MCF 10A (cell line): ENCODE measurements at regions of chr4 and their contacts with region 1.

Region 1: GRCh38 chr4:84366136-84366535 is 133.0 kb downstream of the NKX6-1 start:
- DNase-seq: peak; percentile 44
- H3K4me3 Mint-ChIP-seq: no peak overlapping the region
- H3K27ac Mint-ChIP-seq: no peak overlapping the region
- H3K4me1 Mint-ChIP-seq: no peaks in the 10 kb centered on the region
- H3K27me3 Mint-ChIP-seq: peaks cover 29% of the 10 kb centered on the region
- CTCF ChIP-seq: no peak

Region 2: DNA sequence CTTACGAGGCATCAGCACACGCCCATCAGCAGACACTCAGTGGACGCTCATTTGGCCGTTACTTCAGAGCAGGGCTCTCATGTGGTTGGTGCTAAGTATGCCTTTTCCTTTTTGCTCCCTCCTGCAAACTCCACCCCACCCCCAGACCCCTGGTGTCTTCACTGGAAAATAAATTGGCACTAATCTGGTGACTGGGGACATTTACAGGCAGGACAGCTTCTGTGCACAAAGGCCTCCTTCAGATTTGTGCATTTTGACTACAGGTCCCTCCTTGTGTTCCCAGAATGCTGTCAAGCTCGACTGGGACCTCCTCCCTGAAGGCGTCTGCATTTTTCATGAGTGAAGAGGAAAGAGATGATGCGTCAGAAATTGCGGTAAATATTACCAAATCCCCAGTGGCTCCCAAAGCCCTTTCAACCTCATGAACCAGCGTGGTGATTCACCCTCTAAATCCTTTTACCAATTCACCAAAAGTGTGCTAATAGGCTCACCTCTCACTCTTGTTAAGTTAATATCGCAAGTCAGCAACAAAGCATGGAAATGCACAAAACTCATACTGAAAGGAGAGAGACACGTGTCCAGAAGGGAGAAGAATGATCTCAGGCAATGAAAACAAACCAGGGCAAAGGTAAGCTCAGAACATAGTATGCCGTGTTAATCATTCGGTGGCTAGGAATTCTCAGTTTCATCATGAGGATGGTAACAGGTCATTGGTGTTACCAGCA is 13.9 kb after region 1 on chr4:
- CTCF ChIA-PET with region 1: no interaction called
- POLR2A ChIA-PET with region 1: interaction called, 4 read pairs
- intact Hi-C with region 1: loop called (anchors 1 kb)
- DNase-seq: peak; percentile 94
- H3K4me3 Mint-ChIP-seq: peak overlapping the region; percentile 36
- H3K27ac Mint-ChIP-seq: peak overlapping the region; percentile 17
- H3K4me1 Mint-ChIP-seq: peaks cover 8% of the 10 kb centered on the region
- H3K27me3 Mint-ChIP-seq: no peaks in the 10 kb centered on the region
- CTCF ChIP-seq: no peak

Region 3: DNA sequence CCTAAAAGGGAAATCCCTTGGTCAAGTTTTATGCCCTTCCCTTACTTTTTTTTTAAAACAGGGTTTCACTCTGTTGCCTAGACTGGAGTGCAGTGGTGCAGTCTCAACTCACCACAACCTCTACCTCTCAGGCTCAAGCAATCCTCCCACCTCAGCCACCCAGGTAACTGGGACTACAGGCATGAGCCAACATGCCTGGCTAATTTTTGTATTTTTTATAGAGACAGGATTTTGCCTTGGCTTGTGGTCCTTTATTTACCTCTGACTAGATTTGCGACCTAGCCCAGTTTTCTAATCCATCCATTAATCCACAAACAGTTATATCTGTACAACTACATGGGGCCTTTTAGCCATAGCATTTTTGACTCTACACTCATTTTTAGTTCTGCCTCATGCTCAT is 240.5 kb after region 1 on chr4:
- CTCF ChIA-PET with region 1: no interaction called
- POLR2A ChIA-PET with region 1: no interaction called
- intact Hi-C with region 1: no loop called
- DNase-seq: peak; percentile 37
- H3K4me3 Mint-ChIP-seq: no peak overlapping the region
- H3K27ac Mint-ChIP-seq: peak overlapping the region; percentile 78
- H3K4me1 Mint-ChIP-seq: peaks cover 12% of the 10 kb centered on the region
- H3K27me3 Mint-ChIP-seq: no peaks in the 10 kb centered on the region
- CTCF ChIP-seq: no peak

Region 4: DNA sequence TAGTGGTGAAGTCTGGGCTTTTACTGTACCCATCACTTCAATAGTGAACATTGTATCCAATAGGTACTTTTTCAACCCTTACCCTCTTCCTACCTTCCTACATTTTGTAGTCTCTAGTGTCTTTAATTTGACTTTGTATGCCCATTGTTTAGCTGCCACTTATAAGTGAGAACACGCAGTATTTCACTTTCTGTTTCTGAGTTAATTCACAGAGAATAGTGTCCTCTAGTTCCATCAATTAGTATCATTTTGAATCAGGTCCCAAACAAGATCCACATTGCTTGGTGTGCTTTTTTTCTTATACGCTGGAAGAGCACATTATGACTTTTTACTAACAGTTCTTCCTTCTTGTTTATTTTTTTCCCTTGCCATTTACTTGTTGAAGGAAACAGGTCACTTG is 776.3 kb after region 1 on chr4:
- CTCF ChIA-PET with region 1: no interaction called
- POLR2A ChIA-PET with region 1: no interaction called
- intact Hi-C with region 1: no loop called
- DNase-seq: no peak
- H3K4me3 Mint-ChIP-seq: no peak overlapping the region
- H3K27ac Mint-ChIP-seq: no peak overlapping the region
- H3K4me1 Mint-ChIP-seq: no peaks in the 10 kb centered on the region
- H3K27me3 Mint-ChIP-seq: no peaks in the 10 kb centered on the region
- CTCF ChIP-seq: no peak